ENCODE measurements at regions of chr4 and their contacts with region 1.

Region 1: DNA sequence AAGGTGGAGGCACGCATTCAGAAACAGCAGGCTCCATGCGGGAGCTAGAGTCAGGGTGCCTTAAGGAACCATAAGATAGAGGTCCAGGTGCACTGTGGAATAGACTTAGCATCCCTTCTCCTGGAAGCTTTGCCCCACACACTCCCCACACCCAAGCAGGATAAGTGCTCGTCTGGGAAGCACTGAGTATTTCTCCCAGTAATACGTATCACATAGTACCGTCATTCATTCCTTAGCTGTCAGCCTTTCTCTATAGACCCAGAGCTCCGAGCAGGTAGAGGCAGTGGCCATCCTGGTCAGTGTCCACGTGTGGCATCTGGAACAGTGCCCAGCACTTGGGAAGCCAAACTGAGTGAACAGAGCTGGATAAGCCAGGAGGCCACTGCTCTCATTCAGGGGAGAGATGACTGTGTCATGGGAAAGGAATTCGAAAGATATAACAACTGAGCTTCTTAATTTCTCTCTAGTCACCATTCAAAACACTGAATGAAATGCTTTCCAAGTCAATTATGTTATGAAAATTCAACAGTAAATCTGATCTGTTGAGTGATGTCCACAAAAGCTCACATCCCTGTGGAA is 9.9 kb downstream of the APBB2 start:
- DNase-seq: peak; percentile 80
- H3K4me3 Mint-ChIP-seq: peak overlapping the region; percentile 6
- H3K27ac Mint-ChIP-seq: peak overlapping the region; percentile 83
- H3K4me1 Mint-ChIP-seq: peaks cover 85% of the 10 kb centered on the region
- H3K27me3 Mint-ChIP-seq: no peaks in the 10 kb centered on the region
- CTCF ChIP-seq: no peak

Region 2: GRCh38 chr4:40662962-40663604 is 541.4 kb before region 1 on chr4:
- CTCF ChIA-PET with region 1: no interaction called
- POLR2A ChIA-PET with region 1: no interaction called
- intact Hi-C with region 1: no loop called
- DNase-seq: peak; percentile 73
- H3K4me3 Mint-ChIP-seq: peak overlapping the region; percentile 31
- H3K27ac Mint-ChIP-seq: no peak overlapping the region
- H3K4me1 Mint-ChIP-seq: peaks cover 11% of the 10 kb centered on the region
- H3K27me3 Mint-ChIP-seq: no peaks in the 10 kb centered on the region
- CTCF ChIP-seq: no peak

Region 3: DNA sequence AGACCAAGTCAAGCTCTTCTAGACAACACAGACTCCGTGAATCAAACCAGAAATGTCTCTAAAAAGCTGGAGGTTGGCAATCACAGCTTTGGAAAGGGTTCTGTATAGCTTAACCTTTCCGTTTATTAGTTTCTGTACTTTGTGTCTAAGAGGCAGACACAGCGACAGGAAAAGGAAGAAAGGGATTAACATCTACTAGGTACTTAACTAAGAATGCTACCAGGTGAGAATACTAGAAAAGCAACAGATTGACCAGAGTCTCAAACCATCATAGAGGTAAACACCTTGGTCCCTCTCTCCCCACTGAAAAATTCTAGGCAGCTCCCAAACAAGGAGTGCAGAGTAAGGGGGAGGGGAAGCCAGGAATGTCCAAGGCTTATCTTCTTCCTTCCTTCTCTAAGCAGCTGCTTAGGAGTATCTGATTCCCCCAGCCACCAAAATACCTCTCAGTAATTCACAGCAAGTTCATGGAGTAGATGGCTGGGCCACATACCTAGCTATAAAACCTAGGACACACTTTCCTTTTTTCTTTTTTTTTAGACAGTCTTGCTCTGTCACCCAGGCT is 71.0 kb before region 1 on chr4:
- CTCF ChIA-PET with region 1: interaction called, 3 read pairs
- POLR2A ChIA-PET with region 1: interaction called, 12 read pairs
- intact Hi-C with region 1: no loop called
- DNase-seq: no peak
- H3K4me3 Mint-ChIP-seq: no peak overlapping the region
- H3K27ac Mint-ChIP-seq: peak overlapping the region; percentile 82
- H3K4me1 Mint-ChIP-seq: peaks cover 54% of the 10 kb centered on the region
- H3K27me3 Mint-ChIP-seq: no peaks in the 10 kb centered on the region
- CTCF ChIP-seq: no peak

Region 4: GRCh38 chr4:41143311-41144039 is 61.0 kb before region 1 on chr4:
- CTCF ChIA-PET with region 1: interaction called, 3 read pairs
- POLR2A ChIA-PET with region 1: interaction called, 10 read pairs
- intact Hi-C with region 1: no loop called
- DNase-seq: peak; percentile 90
- H3K4me3 Mint-ChIP-seq: peak overlapping the region; percentile 56
- H3K27ac Mint-ChIP-seq: peak overlapping the region; percentile 93
- H3K4me1 Mint-ChIP-seq: peaks cover 56% of the 10 kb centered on the region
- H3K27me3 Mint-ChIP-seq: no peaks in the 10 kb centered on the region
- CTCF ChIP-seq: no peak

Region 5: DNA sequence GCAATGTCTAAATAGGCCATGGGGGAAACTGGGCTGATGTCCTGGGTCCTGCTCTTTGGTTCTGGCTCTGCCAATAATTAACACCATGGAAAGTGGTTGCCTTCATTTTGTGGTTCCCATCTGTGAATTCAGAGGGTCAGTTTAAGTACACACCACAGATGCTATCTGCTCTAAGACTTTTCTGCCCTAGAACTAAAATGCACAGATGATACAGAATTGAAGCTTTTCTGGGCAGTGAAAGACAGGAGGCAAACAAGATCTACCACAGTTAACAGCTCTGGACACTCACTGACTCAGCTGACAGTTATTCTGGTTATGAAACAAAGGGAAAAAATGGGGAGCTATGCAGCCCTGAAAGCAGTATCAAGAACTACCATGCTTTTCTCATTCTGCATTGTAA is 27.5 kb before region 1 on chr4:
- CTCF ChIA-PET with region 1: interaction called, 5 read pairs
- POLR2A ChIA-PET with region 1: interaction called, 17 read pairs
- intact Hi-C with region 1: no loop called
- DNase-seq: peak; percentile 69
- H3K4me3 Mint-ChIP-seq: no peak overlapping the region
- H3K27ac Mint-ChIP-seq: peak overlapping the region; percentile 95
- H3K4me1 Mint-ChIP-seq: peaks cover 51% of the 10 kb centered on the region
- H3K27me3 Mint-ChIP-seq: no peaks in the 10 kb centered on the region
- CTCF ChIP-seq: peak; percentile 19

Region 6: DNA sequence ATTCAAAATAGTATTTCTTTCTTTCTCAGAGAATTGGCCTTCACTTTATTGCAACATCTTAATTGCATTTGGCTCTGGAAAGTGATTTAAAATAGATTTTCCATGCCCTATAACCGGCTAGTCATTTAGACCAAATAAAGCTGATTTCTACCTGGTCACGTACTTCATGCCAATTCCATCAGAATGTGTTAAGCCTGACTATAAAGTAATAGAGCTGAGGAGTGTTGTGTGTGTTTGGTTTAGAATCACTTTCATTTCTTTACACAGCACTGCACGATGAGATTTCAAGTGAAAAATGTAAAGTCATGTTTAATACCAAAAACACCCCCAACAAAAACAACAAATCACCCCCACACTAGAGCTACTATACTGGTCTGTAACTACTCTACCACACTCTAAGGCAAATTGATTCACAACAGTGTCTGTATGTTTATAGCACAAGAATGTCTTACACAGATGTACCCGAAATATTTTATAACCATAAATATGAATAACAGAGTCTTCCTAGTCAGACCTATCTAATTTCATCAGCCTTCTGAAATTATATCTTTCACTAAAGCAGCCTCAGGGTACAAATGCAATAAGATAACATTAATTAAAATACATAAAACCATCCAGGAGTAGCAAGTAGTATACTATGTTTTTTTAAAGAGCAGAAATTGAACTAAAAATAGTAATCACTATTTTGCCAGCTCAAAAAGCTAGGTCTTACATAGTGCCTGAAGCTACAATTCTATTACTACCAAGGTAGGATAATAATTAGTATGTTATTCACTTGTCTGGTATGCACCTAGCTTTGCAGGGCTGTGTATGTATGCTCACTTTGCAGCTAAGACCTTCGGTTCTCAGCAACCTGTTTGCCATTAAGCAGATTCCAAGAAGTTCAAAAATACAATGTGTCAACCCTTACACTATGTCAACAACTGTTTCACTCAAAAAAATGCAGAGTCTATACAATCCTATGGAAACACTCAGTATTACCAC is 18.6 kb before region 1 on chr4:
- CTCF ChIA-PET with region 1: interaction called, 11 read pairs
- POLR2A ChIA-PET with region 1: interaction called, 98 read pairs
- intact Hi-C with region 1: no loop called
- DNase-seq: peak; percentile 46
- H3K4me3 Mint-ChIP-seq: peak overlapping the region; percentile 49
- H3K27ac Mint-ChIP-seq: peak overlapping the region; percentile 76
- H3K4me1 Mint-ChIP-seq: peaks cover 64% of the 10 kb centered on the region
- H3K27me3 Mint-ChIP-seq: no peaks in the 10 kb centered on the region
- CTCF ChIP-seq: no peak

Region 7: GRCh38 chr4:41294445-41295062 is 90.1 kb after region 1 on chr4:
- CTCF ChIA-PET with region 1: no interaction called
- POLR2A ChIA-PET with region 1: no interaction called
- intact Hi-C with region 1: no loop called
- DNase-seq: no peak
- H3K4me3 Mint-ChIP-seq: no peak overlapping the region
- H3K27ac Mint-ChIP-seq: no peak overlapping the region
- H3K4me1 Mint-ChIP-seq: peaks cover 4% of the 10 kb centered on the region
- H3K27me3 Mint-ChIP-seq: no peaks in the 10 kb centered on the region
- CTCF ChIP-seq: no peak

Measured in MCF 10A (cell line).